ENCODE measurements at regions of chr10 and their contacts with region 1.

Region 1: DNA sequence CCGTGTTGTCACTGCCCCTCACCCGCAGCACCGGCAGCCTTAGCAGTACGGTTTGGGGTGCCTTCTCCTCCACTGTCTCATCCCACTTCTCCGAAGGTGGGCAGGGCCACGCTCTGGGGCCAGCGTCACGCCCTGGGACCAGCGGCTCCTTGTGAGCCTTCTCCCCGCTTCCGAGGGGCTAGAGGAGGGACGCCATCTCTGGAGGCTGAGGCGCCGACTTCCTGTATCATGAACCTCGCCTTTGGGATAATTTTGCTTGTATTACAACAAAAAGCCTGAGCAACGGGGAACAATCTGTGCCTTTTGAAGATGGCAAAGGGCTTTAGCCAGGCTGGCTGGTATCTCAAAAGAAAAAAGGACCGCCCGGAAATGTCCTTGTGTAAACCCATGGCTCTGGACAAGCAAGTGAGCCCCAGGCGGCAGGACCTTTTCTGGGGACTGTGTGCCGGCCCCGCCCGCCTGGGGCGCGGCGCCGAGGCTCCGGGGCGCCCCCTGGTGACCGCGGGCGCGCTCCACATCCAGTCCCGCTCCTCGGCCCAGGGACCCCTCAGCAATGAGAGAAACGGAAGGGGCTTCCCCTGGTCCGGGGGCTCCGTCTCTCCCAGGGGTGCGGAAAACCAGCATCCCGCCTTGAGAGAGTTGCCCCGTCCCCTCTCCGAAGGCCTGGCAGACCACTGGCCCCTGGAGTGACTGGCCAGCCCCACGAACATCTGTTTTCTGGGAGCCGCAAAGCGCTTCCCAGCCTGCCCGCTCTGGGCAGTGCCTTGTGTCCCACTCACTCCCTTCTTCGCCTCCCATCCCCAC is 3.8 kb downstream of the DEPP1 start:
- DNase-seq: peak; percentile 75
- H3K4me3 ChIP-seq: peak overlapping the region; percentile 37
- H3K27ac ChIP-seq: peak overlapping the region; percentile 70
- H3K4me1 ChIP-seq: peaks cover 11% of the 10 kb centered on the region
- H3K27me3 ChIP-seq: no peaks in the 10 kb centered on the region
- CTCF ChIP-seq: peak; percentile 99

Region 2: DNA sequence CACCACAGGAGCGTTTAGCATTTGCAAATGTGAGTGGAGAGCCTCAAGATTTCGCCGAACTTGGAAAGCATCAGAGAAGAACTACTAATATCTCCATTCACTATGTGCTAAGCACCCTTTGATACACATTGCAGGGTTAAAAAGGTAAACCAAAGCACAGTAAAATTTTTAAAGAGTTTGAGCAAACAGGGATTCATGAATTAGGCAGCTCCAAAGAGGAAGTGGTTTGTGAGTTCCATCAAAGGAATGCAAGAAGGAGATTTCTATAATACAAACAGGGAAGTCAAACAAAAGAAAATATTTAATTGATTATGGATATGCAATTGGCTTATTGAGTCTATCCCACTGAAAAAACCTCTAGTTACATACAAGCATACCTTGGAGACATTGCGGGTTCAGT is 144.8 kb before region 1 on chr10:
- intact Hi-C with region 1: no loop called
- DNase-seq: no peak
- H3K4me3 ChIP-seq: no peak overlapping the region
- H3K27ac ChIP-seq: no peak overlapping the region
- H3K4me1 ChIP-seq: no peaks in the 10 kb centered on the region
- H3K27me3 ChIP-seq: no peaks in the 10 kb centered on the region
- CTCF ChIP-seq: no peak

Region 3: GRCh38 chr10:44878706-44879530 is 95.9 kb before region 1 on chr10:
- intact Hi-C with region 1: loop called (anchors 5 kb)
- DNase-seq: peak; percentile 90
- H3K4me3 ChIP-seq: peak overlapping the region; percentile 23
- H3K27ac ChIP-seq: no peak overlapping the region
- H3K4me1 ChIP-seq: no peaks in the 10 kb centered on the region
- H3K27me3 ChIP-seq: no peaks in the 10 kb centered on the region
- CTCF ChIP-seq: no peak

Region 4: DNA sequence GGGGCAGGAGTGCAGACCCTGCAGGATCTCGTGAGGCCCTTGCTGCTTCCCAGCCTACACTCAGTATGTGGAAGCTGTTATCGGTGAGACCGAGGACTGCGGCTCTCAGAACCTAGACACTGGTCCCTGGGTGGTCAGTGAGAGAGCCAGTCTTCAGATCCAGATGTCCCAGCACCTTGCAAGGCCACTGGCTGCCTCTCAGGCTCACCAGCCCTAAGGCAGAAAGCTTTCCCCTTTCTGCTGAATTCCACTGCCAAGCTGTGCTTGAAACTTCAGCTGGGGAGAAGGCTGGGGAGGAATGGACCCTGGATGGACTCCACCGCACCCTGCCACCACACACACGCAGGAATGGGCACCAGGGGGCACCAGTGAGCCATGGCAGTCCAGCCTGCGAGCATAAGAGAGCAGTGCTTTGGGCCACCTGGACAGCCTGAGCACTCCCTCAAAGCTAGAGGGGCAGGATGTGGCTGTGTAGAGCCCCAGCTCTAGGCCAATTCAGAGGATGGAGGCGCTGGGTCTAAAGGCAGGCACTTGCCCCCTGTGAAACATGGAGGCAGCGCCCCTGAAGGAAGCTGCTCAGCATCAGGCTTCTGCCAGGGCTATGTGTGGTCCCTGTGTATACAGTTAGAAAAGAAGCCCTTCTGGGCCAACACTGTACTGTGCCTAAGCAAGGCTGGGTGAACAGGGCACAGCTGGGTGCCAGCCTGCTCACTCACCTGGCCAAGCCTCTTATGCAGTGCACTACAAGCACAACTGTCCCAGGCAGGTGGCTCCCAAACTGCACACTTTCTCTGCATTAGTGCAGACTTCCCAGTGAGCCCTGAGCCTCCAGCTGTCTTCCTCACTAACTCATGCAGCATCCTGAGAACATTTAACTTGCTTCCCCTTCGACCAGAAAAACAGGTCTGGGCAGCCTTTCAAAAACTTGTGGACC is 42.0 kb before region 1 on chr10:
- intact Hi-C with region 1: loop called (anchors 2 kb)
- DNase-seq: peak; percentile 95
- H3K4me3 ChIP-seq: no peak overlapping the region
- H3K27ac ChIP-seq: no peak overlapping the region
- H3K4me1 ChIP-seq: no peaks in the 10 kb centered on the region
- H3K27me3 ChIP-seq: no peaks in the 10 kb centered on the region
- CTCF ChIP-seq: peak; percentile 93